T-cell (primary cell): ENCODE measurements at regions of chr19 and their contacts with region 1.

Region 1: GRCh38 chr19:18281082-18282020 is at the start of gene JUND:
- DNase-seq: peak; percentile 91 to 100 (median 97)
- ATAC-seq: peak; percentile 67 to 70 (median 68)
- H3K4me3 ChIP-seq: peak within 1 kb of the TSS; percentile 100
- H3K4me3 Mint-ChIP-seq: peak within 1 kb of the TSS; percentile 94 to 98 (median 96)
- H3K27ac ChIP-seq: peak within 1 kb of the TSS; percentile 100
- H3K27ac Mint-ChIP-seq: peak within 1 kb of the TSS; percentile 97 to 99
- H3K4me1 ChIP-seq: peaks cover 28 to 49% of the 10 kb centered on the region in 2 experiments
- H3K4me1 Mint-ChIP-seq: peaks cover 44 to 58% (median 51%) of the 10 kb centered on the region in 3 donors
- H3K27me3 ChIP-seq: no peaks in the 10 kb centered on the region
- H3K27me3 Mint-ChIP-seq: no peaks in the 10 kb centered on the region
- total RNA-seq, gene JUND: 247 to 1,161 (median 272) TPM

Region 2: DNA sequence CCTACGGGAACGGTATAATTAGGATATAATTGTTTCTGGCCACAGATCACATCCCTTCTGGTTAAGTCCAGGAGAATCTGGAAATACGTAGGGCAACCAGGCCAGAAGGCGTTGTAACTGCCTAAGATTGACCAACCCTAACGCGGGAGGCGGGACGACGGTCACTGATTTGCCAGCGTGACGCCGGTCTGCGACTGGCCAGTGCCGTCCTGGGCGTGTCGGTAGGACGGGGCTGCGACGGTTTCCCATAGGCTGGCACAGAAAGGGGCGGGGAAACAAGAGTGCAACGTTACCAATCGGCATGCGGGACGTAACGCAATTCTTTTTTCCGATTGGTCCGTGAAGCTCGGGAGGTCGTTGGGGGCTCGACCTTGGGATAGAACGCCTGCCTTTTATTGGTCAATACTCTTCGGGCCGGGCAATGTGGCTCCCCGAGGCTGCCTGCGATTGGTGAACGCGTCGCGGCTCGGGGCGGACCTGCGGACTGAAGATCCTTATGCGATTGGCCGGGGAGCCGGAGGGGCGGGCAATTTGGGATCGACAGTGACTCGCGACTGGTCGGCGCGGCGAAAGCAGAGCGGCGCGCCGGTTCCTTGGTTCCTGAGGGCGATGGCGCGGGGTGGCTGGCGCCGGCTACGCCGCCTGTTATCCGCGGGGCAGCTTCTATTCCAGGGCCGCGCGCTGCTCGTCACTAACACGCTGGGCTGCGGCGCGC is 88.5 kb before region 1 on chr19 and contains the start of gene MPV17L2:
- CTCF ChIA-PET with region 1: interaction called in 1 of 2 experiments, 4 read pairs
- POLR2A ChIA-PET with region 1: interaction called, 3 to 14 read pairs
- DNase-seq: peak; percentile 92 to 99 (median 99)
- ATAC-seq: peak; percentile 87 to 93 (median 92)
- H3K4me3 ChIP-seq: peak within 1 kb of the TSS; percentile 83 to 86
- H3K4me3 Mint-ChIP-seq: peak within 1 kb of the TSS; percentile 87 to 95 (median 87)
- H3K27ac ChIP-seq: peak within 1 kb of the TSS; percentile 84
- H3K27ac Mint-ChIP-seq: peak within 1 kb of the TSS; percentile 95 to 97
- H3K4me1 ChIP-seq: peaks cover 12 to 29% of the 10 kb centered on the region in 2 experiments
- H3K4me1 Mint-ChIP-seq: peaks cover 21 to 24% (median 23%) of the 10 kb centered on the region in 3 donors
- H3K27me3 ChIP-seq: no peaks in the 10 kb centered on the region
- H3K27me3 Mint-ChIP-seq: no peaks in the 10 kb centered on the region
- total RNA-seq, gene MPV17L2: 3.8 to 8.2 (median 8.1) TPM

Region 3: DNA sequence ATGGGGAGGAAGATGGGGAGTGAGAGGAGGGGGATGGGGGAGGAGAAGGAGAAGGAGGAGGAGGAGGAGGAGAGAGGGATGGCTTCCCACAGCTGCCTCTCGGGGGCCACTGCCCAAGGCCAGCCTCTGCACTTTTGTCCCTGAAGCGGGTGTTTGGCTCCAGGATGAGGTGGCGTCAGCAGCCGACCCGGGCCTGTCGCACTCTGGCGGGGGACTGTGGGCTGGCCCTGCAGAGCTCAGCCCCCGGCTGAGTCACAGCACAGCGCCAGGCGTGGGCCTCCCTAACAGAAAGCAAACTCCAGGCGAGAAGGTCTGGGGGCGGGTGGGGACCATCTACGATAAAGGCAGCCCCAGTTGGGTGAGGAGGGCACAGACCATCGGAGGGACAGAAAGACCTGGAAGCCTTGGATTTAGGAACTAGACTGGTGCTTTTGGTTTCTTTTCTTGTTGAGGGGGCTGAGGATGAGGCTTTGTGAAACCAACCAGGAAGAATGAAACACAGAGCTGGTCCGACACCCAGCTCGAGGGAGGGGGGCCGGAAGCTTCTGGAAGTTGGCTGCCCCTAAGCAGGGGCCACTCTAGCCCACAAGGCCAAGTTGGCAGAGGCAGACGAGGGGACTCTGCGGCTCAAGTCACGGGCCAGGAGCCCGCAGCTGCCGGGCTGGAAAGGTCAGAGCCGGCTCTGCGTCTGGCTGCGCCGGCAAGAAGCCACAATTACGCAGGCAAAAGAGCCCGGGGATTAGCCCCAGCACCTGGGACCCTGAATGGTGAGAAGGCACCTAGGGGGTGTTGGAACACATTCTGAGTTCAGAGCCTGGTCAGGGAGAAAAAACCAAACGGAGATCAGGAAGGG is 23.3 kb after region 1 on chr19:
- CTCF ChIA-PET with region 1: interaction called, 6 to 37 read pairs
- POLR2A ChIA-PET with region 1: interaction called, 7 to 85 read pairs
- DNase-seq: peak in 34 of 35 experiments; percentile 55 to 87 (median 71)
- ATAC-seq: peak; percentile 73 to 85 (median 81)
- H3K4me3 ChIP-seq: peak overlapping the region; percentile 66 to 92
- H3K4me3 Mint-ChIP-seq: peak overlapping the region; percentile 88 to 90 (median 89)
- H3K27ac ChIP-seq: peak overlapping the region; percentile 96
- H3K27ac Mint-ChIP-seq: peak overlapping the region; percentile 99 to 100
- H3K4me1 ChIP-seq: peaks cover 22 to 75% of the 10 kb centered on the region in 2 experiments
- H3K4me1 Mint-ChIP-seq: peaks cover 43 to 53% (median 49%) of the 10 kb centered on the region in 3 donors
- H3K27me3 ChIP-seq: no peaks in the 10 kb centered on the region
- H3K27me3 Mint-ChIP-seq: no peaks in the 10 kb centered on the region

Region 4: GRCh38 chr19:18328340-18329034 is 47.1 kb after region 1 on chr19:
- CTCF ChIA-PET with region 1: interaction called, 5 to 35 read pairs
- POLR2A ChIA-PET with region 1: interaction called, 9 to 37 read pairs
- DNase-seq: peak; percentile 66 to 92 (median 83)
- ATAC-seq: peak; percentile 99
- H3K4me3 ChIP-seq: peak overlapping the region; percentile 36 to 49
- H3K4me3 Mint-ChIP-seq: peak overlapping the region; percentile 15 to 59 (median 55)
- H3K27ac ChIP-seq: peak overlapping the region; percentile 16
- H3K27ac Mint-ChIP-seq: peak overlapping the region; percentile 3 to 68
- H3K4me1 ChIP-seq: peaks cover 14 to 21% of the 10 kb centered on the region in 2 experiments
- H3K4me1 Mint-ChIP-seq: peaks cover 18 to 19% (median 18%) of the 10 kb centered on the region in 3 donors
- H3K27me3 ChIP-seq: peaks cover 0 to 12% of the 10 kb centered on the region in 2 experiments
- H3K27me3 Mint-ChIP-seq: no peaks in the 10 kb centered on the region